Posterior cingulate gyrus (tissue), 11 donors: ENCODE measurements at regions of chr18 and their contacts with region 1.

Region 1: DNA sequence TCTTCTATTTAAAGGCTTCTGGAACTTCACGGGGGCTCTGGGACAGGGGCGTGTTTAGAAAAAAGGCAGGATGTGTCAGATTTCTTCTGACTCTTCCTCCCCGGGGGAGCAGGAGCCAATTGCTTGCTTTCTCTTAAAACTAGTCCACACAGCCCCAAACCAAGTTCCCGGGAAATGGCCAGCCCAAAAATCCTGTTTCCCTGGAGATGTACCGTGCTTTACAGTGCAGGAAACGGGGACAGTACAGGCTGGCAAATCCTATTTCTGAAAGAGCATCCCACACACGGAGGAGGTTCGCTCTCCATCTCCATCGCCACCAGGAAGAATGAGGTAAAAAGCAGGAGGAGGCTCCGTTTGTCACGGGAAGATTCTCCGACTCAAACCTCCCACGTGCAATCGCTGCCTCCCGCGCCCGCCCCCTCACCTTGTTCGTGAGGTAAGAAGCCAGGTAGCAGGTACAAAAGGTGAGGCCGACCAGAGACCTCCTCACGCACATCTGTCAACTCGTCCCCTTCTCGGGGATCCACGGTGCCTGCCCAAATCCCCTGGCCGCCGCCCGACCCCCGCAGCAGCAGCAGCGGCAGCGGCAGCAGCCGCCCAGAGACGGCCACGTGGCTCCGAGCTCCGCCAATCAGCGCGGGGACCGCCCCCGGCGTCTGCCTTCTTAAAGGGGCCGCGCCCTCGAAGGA is 15.6 kb upstream of the RIOK3 start:
- DNase-seq: peak; percentile 86 to 99 (median 92)

Region 2: GRCh38 chr18:23452728-23453679 is 15.5 kb after region 1 on chr18 and contains the start of gene RIOK3:
- intact Hi-C with region 1: loop called (anchors 2 kb)
- DNase-seq: peak; percentile 97 to 100 (median 99)

Region 3: GRCh38 chr18:23503038-23503962 is 65.8 kb after region 1 on chr18 and contains the start of gene RMC1:
- intact Hi-C with region 1: no loop called
- DNase-seq: peak; percentile 93 to 100 (median 98)